ENCODE measurements at regions of chr11 and their contacts with region 1.

Region 1: DNA sequence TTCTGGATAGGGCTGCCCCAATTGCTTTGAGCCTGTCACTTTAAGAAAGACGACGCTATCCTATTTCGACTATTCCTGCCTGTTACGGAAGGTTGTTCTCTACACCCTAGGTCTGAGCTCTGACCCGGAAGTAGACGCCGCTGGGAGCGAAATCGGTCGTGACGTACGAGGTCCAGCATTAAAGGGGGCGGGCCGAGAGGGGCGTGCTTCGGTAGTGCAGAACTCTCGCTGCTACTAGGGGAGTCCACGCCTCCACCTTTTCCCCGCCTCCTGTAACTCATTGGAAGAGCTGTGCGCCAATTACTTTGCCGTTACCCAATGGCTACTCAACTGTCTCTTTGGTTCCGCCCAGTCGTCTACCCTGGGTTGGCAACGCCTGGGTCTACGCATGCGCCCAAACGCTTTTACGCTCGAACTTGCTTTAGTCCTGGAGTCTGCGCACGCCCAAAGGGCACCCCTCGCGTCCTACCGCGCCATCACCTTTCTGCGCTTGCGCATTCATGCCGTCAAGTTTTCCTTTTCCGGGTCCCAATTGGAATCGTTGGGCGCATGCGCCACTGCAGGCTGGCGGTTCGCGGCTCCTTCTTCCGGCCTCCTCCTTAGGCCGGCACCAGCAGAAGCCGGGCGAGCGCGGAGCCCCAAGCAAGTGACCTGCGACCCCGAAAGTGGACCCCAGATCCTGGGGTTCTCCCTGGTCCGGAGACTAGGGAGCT is at the start of gene PCNX3:
- DNase-seq: peak; percentile 100
- ATAC-seq: peak; percentile 93
- H3K4me3 Mint-ChIP-seq: peak within 1 kb of the TSS; percentile 96
- H3K27ac Mint-ChIP-seq: peak within 1 kb of the TSS; percentile 94
- H3K4me1 Mint-ChIP-seq: peaks cover 38% of the 10 kb centered on the region
- H3K27me3 Mint-ChIP-seq: no peaks in the 10 kb centered on the region
- total RNA-seq, gene PCNX3: 27.9 to 30.7 TPM

Region 2: GRCh38 chr11:65083834-65084597 is 531.4 kb before region 1 on chr11 and contains the starts of genes CDCA5 and ZFPL1:
- CTCF ChIA-PET with region 1: no interaction called
- POLR2A ChIA-PET with region 1: no interaction called
- intact Hi-C with region 1: loop called in 1 of 2 experiments (anchors 1 kb)
- DNase-seq: peak; percentile 97
- ATAC-seq: peak; percentile 81
- H3K4me3 Mint-ChIP-seq: peak within 1 kb of the TSS; percentile 99
- H3K27ac Mint-ChIP-seq: peak within 1 kb of the TSS; percentile 98
- H3K4me1 Mint-ChIP-seq: peaks cover 41% of the 10 kb centered on the region
- H3K27me3 Mint-ChIP-seq: no peaks in the 10 kb centered on the region
- total RNA-seq, gene CDCA5: 111 to 119 TPM
- total RNA-seq, gene ZFPL1: 24.2 to 31.8 TPM

Region 3: GRCh38 chr11:65540297-65541092 is 74.9 kb before region 1 on chr11:
- CTCF ChIA-PET with region 1: interaction called, 9 read pairs
- POLR2A ChIA-PET with region 1: interaction called, 3 read pairs
- intact Hi-C with region 1: loop called (anchors 1 kb)
- DNase-seq: peak; percentile 93
- ATAC-seq: peak; percentile 89
- H3K4me3 Mint-ChIP-seq: peak overlapping the region; percentile 72
- H3K27ac Mint-ChIP-seq: peak overlapping the region; percentile 81
- H3K4me1 Mint-ChIP-seq: peaks cover 15% of the 10 kb centered on the region
- H3K27me3 Mint-ChIP-seq: no peaks in the 10 kb centered on the region

Region 4: DNA sequence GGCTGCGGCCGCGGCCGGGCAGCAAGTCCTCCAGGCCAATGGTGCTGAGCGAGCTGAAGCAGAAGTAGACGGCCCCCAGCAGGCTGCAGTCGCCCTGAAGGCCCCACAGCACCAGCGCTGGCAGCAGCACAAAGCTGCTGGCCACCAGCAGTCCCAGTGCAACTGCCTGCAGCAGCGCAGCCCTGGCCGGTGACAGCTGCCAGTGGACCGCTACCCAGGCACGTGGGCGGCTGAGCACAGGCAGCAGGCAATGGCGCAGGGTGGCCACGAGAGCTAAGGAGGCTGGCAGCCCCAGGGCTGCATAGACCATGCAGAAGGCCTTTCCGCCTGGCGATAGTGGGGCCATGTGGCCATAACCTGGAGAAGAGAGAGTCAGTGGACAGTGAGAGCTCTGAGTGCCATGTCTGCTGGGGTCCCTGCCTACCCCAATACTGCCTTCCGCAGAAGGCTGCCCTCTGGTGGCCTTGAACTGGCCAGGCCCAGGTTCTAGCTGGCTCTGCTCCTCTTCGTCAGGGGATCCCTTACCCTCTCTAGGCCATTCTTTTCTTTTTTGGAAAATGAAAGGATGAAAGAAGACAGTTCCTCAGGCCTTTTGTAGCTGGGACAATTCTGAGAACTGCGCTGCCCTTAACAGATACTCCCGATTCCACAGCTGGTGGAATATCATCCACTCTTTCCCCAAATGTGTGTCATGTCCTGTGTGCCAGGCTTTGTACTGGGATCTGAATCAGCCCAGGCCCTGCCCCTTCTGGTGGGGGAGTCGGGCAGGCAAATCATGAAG is 21.7 kb before region 1 on chr11:
- CTCF ChIA-PET with region 1: interaction called, 6 read pairs
- POLR2A ChIA-PET with region 1: interaction called, 3 read pairs
- intact Hi-C with region 1: loop called (anchors 1 to 2 kb)
- DNase-seq: peak; percentile 66
- ATAC-seq: peak; percentile 39
- H3K4me3 Mint-ChIP-seq: no peak overlapping the region
- H3K27ac Mint-ChIP-seq: no peak overlapping the region
- H3K4me1 Mint-ChIP-seq: peaks cover 17% of the 10 kb centered on the region
- H3K27me3 Mint-ChIP-seq: no peaks in the 10 kb centered on the region

Region 5: GRCh38 chr11:65711785-65712632 is 96.6 kb after region 1 on chr11 and contains the start of gene KAT5:
- CTCF ChIA-PET with region 1: interaction called, 3 read pairs
- POLR2A ChIA-PET with region 1: no interaction called
- intact Hi-C with region 1: loop called in 1 of 2 experiments (anchors 1 kb)
- DNase-seq: peak; percentile 99
- ATAC-seq: peak; percentile 86
- H3K4me3 Mint-ChIP-seq: peak within 1 kb of the TSS; percentile 90
- H3K27ac Mint-ChIP-seq: peak within 1 kb of the TSS; percentile 96
- H3K4me1 Mint-ChIP-seq: peaks cover 27% of the 10 kb centered on the region
- H3K27me3 Mint-ChIP-seq: no peaks in the 10 kb centered on the region
- total RNA-seq, gene KAT5: 56.5 to 65.1 TPM

Region 6: GRCh38 chr11:65888163-65888814 is 272.9 kb after region 1 on chr11 and contains the start of gene FIBP:
- CTCF ChIA-PET with region 1: interaction called, 9 read pairs
- POLR2A ChIA-PET with region 1: interaction called, 6 read pairs
- intact Hi-C with region 1: loop called in 1 of 2 experiments (anchors 1 kb)
- DNase-seq: peak; percentile 99
- ATAC-seq: peak; percentile 68
- H3K4me3 Mint-ChIP-seq: peak within 1 kb of the TSS; percentile 94
- H3K27ac Mint-ChIP-seq: peak within 1 kb of the TSS; percentile 95
- H3K4me1 Mint-ChIP-seq: peaks cover 57% of the 10 kb centered on the region
- H3K27me3 Mint-ChIP-seq: no peaks in the 10 kb centered on the region
- total RNA-seq, gene FIBP: 95.4 to 121 TPM

Region 7: GRCh38 chr11:66051766-66052663 is 436.6 kb after region 1 on chr11 and contains the start of gene SF3B2:
- CTCF ChIA-PET with region 1: no interaction called
- POLR2A ChIA-PET with region 1: no interaction called
- intact Hi-C with region 1: loop called in 1 of 2 experiments (anchors 1 kb)
- DNase-seq: peak; percentile 99
- ATAC-seq: peak; percentile 99
- H3K4me3 Mint-ChIP-seq: peak within 1 kb of the TSS; percentile 91
- H3K27ac Mint-ChIP-seq: peak within 1 kb of the TSS; percentile 95
- H3K4me1 Mint-ChIP-seq: peaks cover 36% of the 10 kb centered on the region
- H3K27me3 Mint-ChIP-seq: peaks cover 4% of the 10 kb centered on the region
- total RNA-seq, gene SF3B2: 265 to 270 TPM